ENCODE measurements at regions of chr2 and their contacts with region 1.

Region 1: DNA sequence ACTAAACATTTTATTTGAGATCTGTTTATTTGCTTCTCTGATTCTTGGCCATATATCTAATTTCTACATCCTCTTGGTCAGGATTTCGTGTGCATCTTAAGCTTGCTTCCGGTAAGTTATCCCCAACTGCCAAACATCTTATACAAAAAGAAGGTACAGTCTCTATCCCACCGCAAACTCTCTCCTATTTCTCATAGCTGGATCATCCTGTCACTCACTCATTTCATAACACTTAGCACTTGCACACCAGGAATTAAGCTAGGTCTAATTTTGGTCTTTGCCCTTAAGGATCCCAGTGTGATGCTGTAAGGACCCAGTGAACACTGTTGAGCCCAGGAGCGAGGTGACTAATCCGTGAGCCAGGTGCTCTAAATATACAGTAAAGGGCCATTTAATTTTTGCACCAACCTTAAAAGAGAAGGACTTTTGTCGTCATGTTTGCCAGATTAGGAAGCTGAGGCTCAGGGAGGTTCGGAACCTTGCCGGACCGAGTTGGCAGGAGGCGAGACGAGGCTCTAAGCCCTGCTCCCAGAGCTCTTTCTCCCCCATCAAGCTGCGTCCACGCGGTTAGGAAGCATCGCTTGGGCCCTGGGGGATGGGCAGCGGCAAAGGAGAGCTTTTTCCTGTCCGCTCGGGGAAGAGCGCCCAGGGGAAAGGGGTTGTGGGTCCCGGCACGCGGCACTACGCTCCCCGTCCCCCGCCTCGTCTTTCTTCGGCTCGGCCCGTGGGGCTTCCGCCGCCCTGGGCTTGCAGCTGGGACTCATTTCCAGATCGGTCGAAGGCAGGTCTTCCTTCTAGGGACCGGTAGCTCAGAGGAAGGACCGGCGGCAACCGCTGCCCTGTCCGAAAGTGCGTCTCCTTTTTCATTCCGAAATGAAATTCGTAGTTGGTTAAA is 4.1 kb upstream of the ITPRIPL1 start:
- DNase-seq: peak; percentile 85
- H3K4me3 Mint-ChIP-seq: peak overlapping the region; percentile 88
- H3K27ac Mint-ChIP-seq: peak overlapping the region; percentile 98
- H3K4me1 Mint-ChIP-seq: peaks cover 55% of the 10 kb centered on the region
- H3K27me3 Mint-ChIP-seq: no peaks in the 10 kb centered on the region

Region 2: DNA sequence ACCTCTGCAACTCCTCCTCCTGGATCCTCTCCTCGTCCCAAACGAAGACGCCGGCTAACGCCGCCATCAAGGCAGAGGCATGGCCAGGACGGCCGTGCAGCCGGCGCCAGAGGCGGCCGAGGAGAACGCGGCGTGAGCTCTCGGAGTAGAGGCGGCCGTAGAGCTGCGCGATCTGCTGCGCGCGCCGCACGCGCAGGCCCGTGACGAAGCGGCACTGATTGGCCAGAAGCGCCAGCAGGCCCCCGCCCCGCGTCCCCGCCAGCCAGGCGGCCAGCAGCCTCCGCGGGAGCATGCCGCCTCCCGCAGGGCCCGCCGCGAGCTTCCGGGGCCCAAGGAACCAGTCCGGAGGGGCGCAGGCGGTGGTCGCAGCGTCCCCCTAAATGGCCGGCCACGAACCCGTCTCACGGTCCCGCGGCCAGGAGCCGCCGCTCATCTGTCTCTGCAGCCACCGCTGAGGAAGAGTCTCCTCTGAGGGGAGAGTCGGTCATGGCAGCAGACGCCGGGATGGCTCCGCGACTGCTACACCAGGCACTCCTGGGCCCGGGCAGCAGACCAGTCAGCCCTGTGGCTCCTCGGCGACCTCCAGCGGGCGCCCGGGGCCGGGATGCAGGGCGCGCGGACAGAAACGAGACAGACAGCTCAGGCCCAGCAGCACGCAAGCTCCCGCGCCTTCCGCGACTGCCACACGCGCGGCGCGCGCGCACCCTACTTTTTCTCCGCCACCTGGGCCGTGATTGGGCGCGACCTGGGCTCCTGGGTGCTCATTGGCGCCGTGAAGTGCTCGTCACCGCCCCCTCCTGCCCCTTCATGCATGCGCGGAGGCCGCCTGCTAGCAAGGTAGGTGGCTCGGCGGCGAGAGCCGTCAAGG is 112.6 kb before region 1 on chr2 and contains the start of gene STARD7:
- intact Hi-C with region 1: loop called (anchors 5 kb)
- DNase-seq: peak; percentile 99
- H3K4me3 Mint-ChIP-seq: peak within 1 kb of the TSS; percentile 96
- H3K27ac Mint-ChIP-seq: peak within 1 kb of the TSS; percentile 90
- H3K4me1 Mint-ChIP-seq: peaks cover 50% of the 10 kb centered on the region
- H3K27me3 Mint-ChIP-seq: no peaks in the 10 kb centered on the region
- total RNA-seq, gene STARD7: 212 and 217 TPM in 2 replicates

Region 3: GRCh38 chr2:96265840-96266679 is 54.9 kb before region 1 on chr2 and contains the starts of genes CIAO1 and TMEM127:
- intact Hi-C with region 1: loop called (anchors 5 kb)
- DNase-seq: peak; percentile 100
- H3K4me3 Mint-ChIP-seq: peak within 1 kb of the TSS; percentile 99
- H3K27ac Mint-ChIP-seq: peak within 1 kb of the TSS; percentile 98
- H3K4me1 Mint-ChIP-seq: peaks cover 38% of the 10 kb centered on the region
- H3K27me3 Mint-ChIP-seq: no peaks in the 10 kb centered on the region
- total RNA-seq, gene CIAO1: 105 and 110 TPM in 2 replicates
- total RNA-seq, gene TMEM127: 31.6 and 33.1 TPM in 2 replicates

Region 4: DNA sequence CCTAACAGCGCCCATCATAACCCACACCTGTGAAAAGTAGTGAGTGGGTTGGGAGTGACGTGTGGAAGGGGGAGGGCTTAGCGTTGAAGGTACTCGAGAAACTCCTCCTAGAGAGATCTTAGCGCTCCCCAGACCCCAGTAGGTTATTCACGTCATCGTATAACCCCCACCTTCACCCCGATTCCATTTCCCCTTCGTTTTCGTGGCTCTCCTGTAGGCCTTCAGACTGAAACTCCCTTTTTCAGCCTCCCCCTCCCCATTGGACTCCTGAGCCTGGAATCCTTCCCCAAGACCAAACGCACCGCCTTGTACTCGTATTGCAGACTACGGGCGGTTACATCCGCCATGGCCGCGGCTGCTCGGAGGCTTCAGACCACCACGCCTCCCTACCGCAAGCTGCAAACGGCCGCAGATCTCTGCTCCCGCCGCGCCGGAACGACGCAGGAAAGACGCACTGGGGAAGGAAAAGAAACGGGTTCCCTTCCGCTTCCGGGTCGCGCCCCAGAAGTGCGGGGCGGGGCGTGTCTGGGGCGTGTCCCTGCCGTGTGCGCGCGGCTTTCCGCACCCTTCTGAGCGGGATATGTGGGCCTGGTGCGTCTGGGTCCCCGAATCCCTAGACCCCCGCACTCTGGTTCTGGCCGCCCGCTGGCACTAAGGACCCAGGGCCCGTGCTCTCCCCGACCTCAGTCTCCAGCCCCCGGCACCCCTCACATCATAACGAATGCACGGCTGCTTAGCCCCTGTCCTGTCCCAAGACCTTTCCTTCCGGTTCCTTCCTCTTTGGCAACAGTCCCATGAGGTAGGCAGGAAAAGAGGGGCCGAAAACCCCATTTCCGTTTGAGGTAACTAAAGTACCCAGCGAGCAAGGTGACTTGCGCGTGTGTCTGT is 15.6 kb before region 1 on chr2 and contains the start of gene SNRNP200:
- intact Hi-C with region 1: loop called (anchors 1 kb)
- DNase-seq: peak; percentile 97
- H3K4me3 Mint-ChIP-seq: peak within 1 kb of the TSS; percentile 100
- H3K27ac Mint-ChIP-seq: peak within 1 kb of the TSS; percentile 99
- H3K4me1 Mint-ChIP-seq: peaks cover 56% of the 10 kb centered on the region
- H3K27me3 Mint-ChIP-seq: no peaks in the 10 kb centered on the region
- total RNA-seq, gene SNRNP200: 197 and 203 TPM in 2 replicates

Region 5: GRCh38 chr2:96336104-96336775 is 15.3 kb after region 1 on chr2:
- intact Hi-C with region 1: loop called (anchors 1 kb)
- DNase-seq: peak; percentile 69
- H3K4me3 Mint-ChIP-seq: peak overlapping the region; percentile 91
- H3K27ac Mint-ChIP-seq: peak overlapping the region; percentile 88
- H3K4me1 Mint-ChIP-seq: peaks cover 49% of the 10 kb centered on the region
- H3K27me3 Mint-ChIP-seq: no peaks in the 10 kb centered on the region

Region 6: DNA sequence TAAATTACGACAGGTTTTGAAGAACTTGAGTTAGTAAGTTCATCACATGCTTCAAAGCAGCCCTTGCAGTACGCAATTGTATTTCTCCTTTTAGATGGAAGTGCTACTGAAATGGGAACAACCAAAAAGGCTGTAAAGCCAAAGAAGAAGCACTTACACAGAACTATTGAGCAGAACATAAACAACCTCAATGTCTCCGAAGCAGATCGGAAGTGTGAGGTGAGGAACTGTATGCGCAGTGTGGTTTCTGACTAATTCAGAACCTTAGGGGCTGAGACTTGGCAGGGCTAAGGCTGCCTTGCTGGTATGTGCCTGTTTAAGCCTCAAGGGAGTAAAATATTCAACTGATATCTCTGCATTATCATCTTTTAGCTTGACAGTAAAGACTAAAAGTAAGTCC is 23.0 kb after region 1 on chr2:
- intact Hi-C with region 1: loop called (anchors 1 kb)
- DNase-seq: peak; percentile 75
- H3K4me3 Mint-ChIP-seq: no peak overlapping the region
- H3K27ac Mint-ChIP-seq: peak overlapping the region; percentile 75
- H3K4me1 Mint-ChIP-seq: peaks cover 47% of the 10 kb centered on the region
- H3K27me3 Mint-ChIP-seq: no peaks in the 10 kb centered on the region

Region 7: GRCh38 chr2:96485751-96486651 is 165.0 kb after region 1 on chr2:
- intact Hi-C with region 1: loop called (anchors 2 kb)
- DNase-seq: peak; percentile 97
- H3K4me3 Mint-ChIP-seq: peak overlapping the region; percentile 92
- H3K27ac Mint-ChIP-seq: peak overlapping the region; percentile 98
- H3K4me1 Mint-ChIP-seq: peaks cover 55% of the 10 kb centered on the region
- H3K27me3 Mint-ChIP-seq: peaks cover 2% of the 10 kb centered on the region